ENCODE measurements at regions of chr2 and their contacts with region 1.

Region 1: GRCh38 chr2:135531231-135532228 is at the start of gene R3HDM1:
- DNase-seq: peak; percentile 97 to 100
- H3K4me3 ChIP-seq: peak within 1 kb of the TSS; percentile 78 to 82
- H3K27ac ChIP-seq: peak within 1 kb of the TSS; percentile 86 to 95
- H3K4me1 ChIP-seq: peaks cover 0 to 10% of the 10 kb centered on the region in 2 donors
- H3K27me3 ChIP-seq: no peaks in the 10 kb centered on the region
- CTCF ChIP-seq: peak in 1 of 3 experiments; percentile 4
- total RNA-seq, gene R3HDM1: 5.0 TPM

Region 2: DNA sequence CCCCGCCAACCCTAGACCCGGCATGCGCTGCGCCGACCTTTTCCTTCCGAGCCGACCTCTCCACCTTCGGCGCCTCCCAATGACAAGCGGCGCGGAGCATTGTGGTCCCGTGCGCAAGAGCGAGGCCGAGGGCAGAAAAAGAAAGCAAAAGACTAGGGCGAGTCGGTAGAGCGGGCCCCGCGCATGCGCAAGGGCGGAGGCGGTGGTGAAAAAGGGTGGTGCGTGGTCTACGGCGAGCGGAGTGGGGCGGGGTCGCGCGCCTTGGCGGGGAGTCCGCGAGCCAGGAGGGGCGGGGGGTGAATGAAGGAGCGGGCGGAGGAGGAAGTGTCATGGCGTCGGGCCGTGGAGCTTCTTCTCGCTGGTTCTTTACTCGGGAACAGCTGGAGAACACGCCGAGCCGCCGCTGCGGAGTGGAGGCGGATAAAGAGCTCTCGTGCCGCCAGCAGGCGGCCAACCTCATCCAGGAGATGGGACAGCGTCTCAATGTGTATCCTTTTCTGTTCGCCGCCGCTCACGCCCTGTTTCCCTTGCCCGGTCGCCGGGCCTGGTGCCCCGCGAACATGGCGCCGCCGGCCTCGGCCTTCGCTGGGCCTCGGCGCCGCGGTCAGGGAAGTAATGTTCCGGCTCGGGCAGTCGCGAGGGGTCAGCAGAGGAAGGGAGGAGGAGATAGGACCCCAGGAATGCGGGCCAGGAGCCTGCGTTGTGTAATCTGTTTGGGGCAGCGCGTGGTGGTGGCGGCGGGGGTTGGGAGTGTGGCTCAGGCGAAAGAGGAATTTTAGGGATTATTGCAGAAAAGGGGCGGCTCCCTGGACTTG is 612.8 kb before region 1 on chr2 and contains the start of gene CCNT2:
- intact Hi-C with region 1: loop called (anchors 1 kb)
- DNase-seq: peak; percentile 97 to 99
- H3K4me3 ChIP-seq: peak within 1 kb of the TSS; percentile 83 to 88
- H3K27ac ChIP-seq: peak within 1 kb of the TSS; percentile 96 to 98
- H3K4me1 ChIP-seq: peaks cover 5 to 25% of the 10 kb centered on the region in 2 donors
- H3K27me3 ChIP-seq: no peaks in the 10 kb centered on the region
- CTCF ChIP-seq: no peak
- total RNA-seq, gene CCNT2: 14.2 TPM

Region 3: GRCh38 chr2:135876066-135876711 is 344.7 kb after region 1 on chr2 and contains the start of gene MCM6:
- intact Hi-C with region 1: loop called (anchors 1 kb)
- DNase-seq: peak; percentile 92 to 98
- H3K4me3 ChIP-seq: peak within 1 kb of the TSS; percentile 82 to 83
- H3K27ac ChIP-seq: peak within 1 kb of the TSS; percentile 87 to 91
- H3K4me1 ChIP-seq: peaks cover 0 to 5% of the 10 kb centered on the region in 2 donors
- H3K27me3 ChIP-seq: no peaks in the 10 kb centered on the region
- CTCF ChIP-seq: no peak
- total RNA-seq, gene MCM6: 62.5 TPM

Measured in ascending aorta (tissue), 2 donors.